OCI-LY7 (cell line): ENCODE measurements at regions of chr13 and their contacts with region 1.

Region 1: GRCh38 chr13:40589285-40590109 is 76.9 kb downstream of the FOXO1 start:
- DNase-seq: peak; percentile 97
- H3K4me3 ChIP-seq: peak overlapping the region; percentile 63
- H3K27ac ChIP-seq: peak overlapping the region; percentile 92
- H3K4me1 ChIP-seq: peaks cover 97% of the 10 kb centered on the region
- CTCF ChIP-seq: no peak

Region 2: GRCh38 chr13:40069173-40070044 is 520.1 kb before region 1 on chr13:
- CTCF ChIA-PET with region 1: no interaction called
- POLR2A ChIA-PET with region 1: no interaction called
- intact Hi-C with region 1: loop called (anchors 5 kb)
- DNase-seq: peak; percentile 81
- H3K4me3 ChIP-seq: no peak overlapping the region
- H3K27ac ChIP-seq: no peak overlapping the region
- H3K4me1 ChIP-seq: peaks cover 24% of the 10 kb centered on the region
- CTCF ChIP-seq: peak; percentile 98

Region 3: DNA sequence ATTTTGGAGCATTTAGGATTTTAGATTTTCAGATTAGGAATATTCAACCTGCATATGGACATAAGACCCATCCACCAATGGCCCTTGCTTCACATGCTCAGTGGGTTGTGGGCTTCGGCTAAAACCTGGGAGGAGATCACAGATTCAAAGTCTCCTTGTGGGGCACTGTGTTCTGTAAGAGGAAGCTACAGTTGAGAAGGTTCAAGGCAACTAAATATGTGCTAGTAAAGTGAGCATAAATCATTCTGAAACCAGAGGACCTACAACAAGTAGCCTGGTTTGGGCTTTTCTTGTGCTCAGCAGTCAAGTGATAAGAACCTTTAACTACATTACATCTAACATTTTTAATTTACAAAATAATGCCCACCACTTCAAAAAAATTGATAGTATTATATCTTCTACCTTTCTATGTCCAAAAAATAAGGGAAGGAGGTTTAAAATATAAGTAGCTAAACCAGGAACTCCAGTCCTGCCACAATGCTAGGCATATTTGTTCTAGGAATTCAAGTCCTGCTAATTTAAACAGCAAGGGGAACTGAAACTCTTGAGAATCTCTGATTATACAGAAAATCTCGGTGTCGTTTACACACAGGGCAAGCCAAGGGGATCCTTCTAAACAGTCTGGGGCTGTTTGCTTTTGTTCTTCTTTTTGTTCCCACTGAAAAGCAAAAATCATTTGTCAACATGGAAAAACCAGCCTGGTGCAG is 40.3 kb after region 1 on chr13:
- CTCF ChIA-PET with region 1: no interaction called
- POLR2A ChIA-PET with region 1: interaction called, 5 read pairs
- intact Hi-C with region 1: loop called (anchors 2 kb)
- DNase-seq: peak; percentile 78
- H3K4me3 ChIP-seq: peak overlapping the region; percentile 56
- H3K27ac ChIP-seq: peak overlapping the region; percentile 77
- H3K4me1 ChIP-seq: peaks cover 68% of the 10 kb centered on the region
- CTCF ChIP-seq: peak; percentile 34; the same call in 1 of the 2 replicates

Region 4: GRCh38 chr13:40653527-40654318 is 64.2 kb after region 1 on chr13:
- CTCF ChIA-PET with region 1: no interaction called
- POLR2A ChIA-PET with region 1: interaction called, 3 read pairs
- intact Hi-C with region 1: loop called (anchors 2 kb)
- DNase-seq: peak; percentile 58
- H3K4me3 ChIP-seq: peak overlapping the region; percentile 64
- H3K27ac ChIP-seq: peak overlapping the region; percentile 96
- H3K4me1 ChIP-seq: peaks cover 95% of the 10 kb centered on the region
- CTCF ChIP-seq: no peak; the same call in 1 of the 2 replicates

Region 5: DNA sequence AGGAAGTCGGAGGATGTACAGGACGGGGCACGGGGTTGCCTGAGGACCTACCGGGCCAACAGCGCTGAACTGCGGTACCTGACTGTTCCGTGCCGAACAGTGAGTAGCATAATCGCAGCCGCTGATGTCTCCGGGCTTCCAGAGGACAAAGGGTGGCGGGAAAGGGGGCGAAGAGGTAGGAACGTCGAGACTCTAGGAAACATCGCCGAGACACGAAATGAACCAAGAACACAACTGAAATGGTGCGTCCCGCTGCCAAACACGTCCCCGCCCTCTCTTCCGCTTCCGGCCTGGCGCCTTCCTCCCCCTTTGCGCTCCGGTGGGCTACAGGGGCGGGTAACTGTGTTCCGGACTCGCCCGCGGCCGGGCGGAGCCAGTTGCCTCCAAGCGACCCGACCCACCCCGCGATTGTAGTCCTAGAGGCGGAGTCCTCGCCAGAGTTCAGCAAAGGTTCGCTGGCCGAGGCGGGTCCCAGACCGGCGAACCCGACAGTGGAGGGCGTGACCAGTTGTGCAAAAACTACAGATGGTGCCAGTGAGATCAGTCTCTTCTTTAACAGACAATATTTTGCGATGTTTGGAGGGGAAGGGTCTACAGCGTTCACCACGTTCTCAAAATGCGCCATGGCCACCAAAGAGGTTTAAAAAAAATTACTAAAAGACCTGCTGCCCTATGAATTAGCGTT is 181.6 kb after region 1 on chr13 and contains the start of gene MRPS31:
- CTCF ChIA-PET with region 1: no interaction called
- POLR2A ChIA-PET with region 1: interaction called, 3 read pairs
- intact Hi-C with region 1: loop called (anchors 10 kb)
- DNase-seq: peak; percentile 96
- H3K4me3 ChIP-seq: peak within 1 kb of the TSS; percentile 86
- H3K27ac ChIP-seq: peak within 1 kb of the TSS; percentile 72
- H3K4me1 ChIP-seq: peaks cover 27% of the 10 kb centered on the region
- CTCF ChIP-seq: no peak; the same call in 1 of the 2 replicates
- total RNA-seq, gene MRPS31: 27.0 and 37.3 TPM in 2 replicates

Region 6: DNA sequence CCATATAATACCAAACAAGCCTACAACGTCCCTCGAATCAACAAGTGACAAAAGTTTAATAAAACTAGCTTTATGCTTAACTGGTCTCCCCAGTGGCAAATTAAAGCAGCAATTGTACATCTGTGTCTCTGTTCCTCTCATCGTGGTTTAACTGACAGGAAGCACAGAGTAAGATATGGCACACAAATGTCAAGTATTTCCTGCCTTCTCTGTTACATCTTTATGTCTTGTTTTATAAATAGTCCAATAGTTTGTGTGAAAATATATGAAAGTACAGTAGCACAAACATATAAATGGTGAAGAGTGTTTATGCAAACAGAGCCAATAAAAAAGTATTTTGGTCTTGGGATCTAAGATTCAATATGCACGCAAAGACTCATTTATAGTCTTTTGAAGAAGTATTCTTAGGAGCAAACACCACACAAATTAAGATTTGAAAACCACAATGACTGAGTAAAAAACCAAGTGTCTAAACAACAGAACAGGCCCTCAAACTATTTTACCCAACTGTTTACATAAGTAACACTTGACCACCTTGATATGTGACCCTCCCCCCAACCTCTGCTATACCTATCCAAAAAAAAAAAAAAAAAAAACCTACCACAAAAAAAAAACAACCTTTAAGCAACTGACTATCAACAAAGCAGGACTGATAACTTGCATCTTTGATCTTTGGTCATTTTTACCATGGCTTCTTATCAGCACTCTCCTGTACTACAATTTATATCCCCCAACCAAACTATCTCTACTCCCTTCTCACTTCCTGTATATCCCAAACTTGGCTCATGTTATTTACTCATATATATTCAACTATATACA is 415.6 kb after region 1 on chr13:
- CTCF ChIA-PET with region 1: no interaction called
- POLR2A ChIA-PET with region 1: no interaction called
- intact Hi-C with region 1: loop called (anchors 10 kb)
- DNase-seq: peak; percentile 89
- H3K4me3 ChIP-seq: peak overlapping the region; percentile 64
- H3K27ac ChIP-seq: peak overlapping the region; percentile 99
- H3K4me1 ChIP-seq: peaks cover 95% of the 10 kb centered on the region
- CTCF ChIP-seq: no peak